GM12878 (cell line): ENCODE measurements at regions of chr1 and their contacts with region 1.

Region 1: DNA sequence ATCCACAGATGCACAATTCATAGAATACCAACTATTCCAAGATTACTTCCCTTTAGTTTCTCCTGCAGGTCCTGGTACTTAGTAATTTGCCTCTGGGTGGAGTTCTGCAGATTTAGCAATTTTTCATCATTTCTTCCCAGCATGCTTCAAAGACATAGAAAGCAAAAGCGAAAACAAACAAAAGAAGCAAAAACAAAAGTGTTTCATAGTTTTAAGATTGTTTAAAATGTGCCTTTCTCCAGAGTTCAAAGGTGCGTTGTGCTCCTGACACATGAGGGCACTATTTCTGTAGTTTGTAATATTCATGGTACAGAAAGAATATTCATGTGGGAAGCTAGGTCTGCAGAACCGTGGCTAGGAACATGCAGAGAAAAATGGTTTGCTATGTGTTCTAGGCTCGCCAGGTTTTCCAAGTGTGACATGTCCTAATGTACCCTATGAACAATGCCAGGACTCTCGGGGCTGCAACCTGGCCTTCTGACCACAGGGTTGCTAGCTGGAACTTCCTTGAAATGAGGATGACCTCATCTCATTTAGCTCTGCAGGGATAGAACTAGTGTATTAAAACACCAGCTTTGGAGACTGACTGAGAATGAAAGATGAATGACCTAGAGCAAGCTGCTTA is 30.0 kb upstream of the RCSD1 start:
- DNase-seq: peak; percentile 79
- ATAC-seq: peak; percentile 93
- H3K4me3 ChIP-seq: peak overlapping the region; percentile 4; the same call in 1 of the 2 replicates
- H3K27ac ChIP-seq: peak overlapping the region; percentile 55
- H3K4me1 ChIP-seq: peaks cover 31% of the 10 kb centered on the region
- H3K27me3 ChIP-seq: no peaks in the 10 kb centered on the region
- CTCF ChIP-seq: peak; percentile 58 to 81 (median 80); a peak in 5 of 6 replicates
- EP300 ChIP-seq: no peak
- POLR2A ChIP-seq: no peak
- RAD21 ChIP-seq: peak; percentile 90

Region 2: GRCh38 chr1:167517535-167518330 is 82.3 kb before region 1 on chr1:
- CTCF ChIA-PET with region 1: no interaction called
- POLR2A ChIA-PET with region 1: no interaction called
- RAD21 ChIA-PET with region 1: no interaction called
- SMC1A ChIA-PET with region 1: no interaction called
- in situ Hi-C with region 1: no loop called
- intact Hi-C with region 1: no loop called
- DNase-seq: no peak
- ATAC-seq: no peak
- H3K4me3 ChIP-seq: no peak overlapping the region
- H3K27ac ChIP-seq: no peak overlapping the region
- H3K4me1 ChIP-seq: no peaks in the 10 kb centered on the region
- H3K27me3 ChIP-seq: peaks cover 0 to 3% of the 10 kb centered on the region in 2 experiments; a peak in 2 of 4 replicates
- CTCF ChIP-seq: no peak
- EP300 ChIP-seq: no peak
- POLR2A ChIP-seq: no peak
- RAD21 ChIP-seq: no peak

Region 3: GRCh38 chr1:167573026-167573425 is 27.0 kb before region 1 on chr1:
- CTCF ChIA-PET with region 1: interaction called, 10 read pairs
- POLR2A ChIA-PET with region 1: no interaction called
- RAD21 ChIA-PET with region 1: no interaction called
- SMC1A ChIA-PET with region 1: interaction called, 4 read pairs
- in situ Hi-C with region 1: no loop called
- intact Hi-C with region 1: no loop called
- DNase-seq: no peak
- ATAC-seq: no peak
- H3K4me3 ChIP-seq: no peak overlapping the region
- H3K27ac ChIP-seq: no peak overlapping the region
- H3K4me1 ChIP-seq: no peaks in the 10 kb centered on the region
- H3K27me3 ChIP-seq: no peaks in the 10 kb centered on the region
- CTCF ChIP-seq: no peak
- EP300 ChIP-seq: no peak
- POLR2A ChIP-seq: no peak
- RAD21 ChIP-seq: no peak

Region 4: GRCh38 chr1:167650269-167651160 is 50.4 kb after region 1 on chr1:
- CTCF ChIA-PET with region 1: interaction called, 4 read pairs
- POLR2A ChIA-PET with region 1: interaction called, 5 read pairs
- RAD21 ChIA-PET with region 1: interaction called, 14 read pairs
- SMC1A ChIA-PET with region 1: interaction called, 21 read pairs
- in situ Hi-C with region 1: no loop called
- intact Hi-C with region 1: no loop called
- DNase-seq: no peak
- ATAC-seq: peak; percentile 92
- H3K4me3 ChIP-seq: no peak overlapping the region
- H3K27ac ChIP-seq: peak overlapping the region; percentile 55
- H3K4me1 ChIP-seq: peaks cover 39% of the 10 kb centered on the region
- H3K27me3 ChIP-seq: no peaks in the 10 kb centered on the region
- CTCF ChIP-seq: no peak
- EP300 ChIP-seq: no peak
- POLR2A ChIP-seq: peak; percentile 23; the same call in 1 of the 2 replicates
- RAD21 ChIP-seq: no peak

Region 5: GRCh38 chr1:167681451-167682098 is 81.5 kb after region 1 on chr1:
- CTCF ChIA-PET with region 1: interaction called, 255 read pairs
- POLR2A ChIA-PET with region 1: interaction called, 28 read pairs
- RAD21 ChIA-PET with region 1: interaction called, 182 read pairs
- SMC1A ChIA-PET with region 1: interaction called, 215 read pairs
- in situ Hi-C with region 1: loop called (anchors 5 kb)
- intact Hi-C with region 1: no loop called
- DNase-seq: no peak
- ATAC-seq: peak; percentile 16; the same call in 2 of the 3 replicates
- H3K4me3 ChIP-seq: no peak overlapping the region
- H3K27ac ChIP-seq: peak overlapping the region; percentile 36
- H3K4me1 ChIP-seq: peaks cover 49% of the 10 kb centered on the region
- H3K27me3 ChIP-seq: no peaks in the 10 kb centered on the region
- CTCF ChIP-seq: no peak
- EP300 ChIP-seq: no peak
- POLR2A ChIP-seq: no peak
- RAD21 ChIP-seq: no peak

Region 6: GRCh38 chr1:167715157-167715999 is 115.3 kb after region 1 on chr1:
- CTCF ChIA-PET with region 1: interaction called, 17 read pairs
- POLR2A ChIA-PET with region 1: no interaction called
- RAD21 ChIA-PET with region 1: interaction called, 13 read pairs
- SMC1A ChIA-PET with region 1: interaction called, 17 read pairs
- in situ Hi-C with region 1: no loop called
- intact Hi-C with region 1: no loop called
- DNase-seq: peak; percentile 97
- ATAC-seq: peak; percentile 40
- H3K4me3 ChIP-seq: peak overlapping the region; percentile 95
- H3K27ac ChIP-seq: peak overlapping the region; percentile 98
- H3K4me1 ChIP-seq: peaks cover 24% of the 10 kb centered on the region
- H3K27me3 ChIP-seq: no peaks in the 10 kb centered on the region
- CTCF ChIP-seq: peak; percentile 72 to 99 (median 80)
- EP300 ChIP-seq: 0 out of 4 replicates have a peak, but pooled peaks of 1 of the 2 experiments have one; percentile 60
- POLR2A ChIP-seq: no peak
- RAD21 ChIP-seq: peak; percentile 43; the same call in 1 of the 2 replicates